ENCODE measurements at regions of chr14 and their contacts with region 1.

Region 1: GRCh38 chr14:25298238-25298637 is 248.3 kb upstream of the STXBP6 start:
- DNase-seq: no peak
- H3K4me3 ChIP-seq: no peak overlapping the region
- H3K27ac ChIP-seq: no peak overlapping the region
- H3K4me1 ChIP-seq: no peaks in the 10 kb centered on the region
- H3K27me3 ChIP-seq: no peaks in the 10 kb centered on the region
- CTCF ChIP-seq: no peak
- EP300 ChIP-seq: no peak
- POLR2A ChIP-seq: no peak

Region 2: DNA sequence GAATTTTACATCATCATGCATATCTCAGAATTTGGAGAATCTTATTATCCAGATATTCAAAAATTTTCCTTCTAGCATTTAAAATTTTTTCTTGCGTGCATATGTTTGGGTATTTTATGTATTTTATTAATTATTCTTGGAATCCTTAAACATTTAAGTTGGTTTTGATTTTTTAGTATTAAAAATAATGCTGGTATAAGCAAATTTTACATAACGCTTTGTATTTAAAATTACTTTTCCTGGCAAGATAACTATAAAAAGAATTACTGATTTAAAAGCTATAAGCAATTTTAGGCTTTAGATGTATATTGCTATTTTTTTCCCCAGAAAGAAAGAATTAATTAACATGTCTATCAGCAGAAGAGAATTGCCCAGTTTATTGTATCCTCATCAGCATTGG is 23.7 kb before region 1 on chr14:
- intact Hi-C with region 1: loop called in 1 of 4 experiments (anchors 1 kb)
- DNase-seq: no peak
- H3K4me3 ChIP-seq: no peak overlapping the region
- H3K27ac ChIP-seq: no peak overlapping the region
- H3K4me1 ChIP-seq: no peaks in the 10 kb centered on the region
- H3K27me3 ChIP-seq: no peaks in the 10 kb centered on the region
- CTCF ChIP-seq: no peak
- EP300 ChIP-seq: no peak
- POLR2A ChIP-seq: no peak

Region 3: DNA sequence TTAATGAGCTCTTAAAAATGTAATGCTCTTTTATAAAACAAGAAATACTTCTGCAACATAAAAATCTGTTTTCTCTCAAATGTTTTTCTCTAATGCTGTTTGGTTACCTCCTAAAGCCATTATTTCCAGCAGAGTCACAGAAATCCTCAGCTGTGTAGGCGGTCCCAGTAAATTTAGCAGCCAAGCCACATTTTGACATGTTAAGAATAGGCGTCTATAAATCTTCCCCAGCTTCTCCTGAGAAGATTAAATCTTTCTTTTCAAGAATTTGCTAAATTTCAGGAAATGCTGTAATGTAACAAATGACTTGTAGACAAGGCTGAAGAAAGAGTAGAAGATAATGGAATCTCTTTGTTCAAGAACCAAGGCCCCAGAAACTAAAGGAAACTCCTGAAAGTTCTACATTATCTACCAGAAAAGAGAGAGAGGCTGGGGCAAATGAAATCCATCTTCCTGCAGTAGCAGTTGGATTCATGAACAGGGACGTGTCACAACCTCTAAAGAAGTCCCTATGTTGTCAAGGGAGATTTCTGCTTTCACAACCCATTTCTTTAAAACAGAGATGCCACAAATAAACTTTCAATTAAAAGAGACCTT is 539.3 kb after region 1 on chr14:
- intact Hi-C with region 1: no loop called
- DNase-seq: no peak
- H3K4me3 ChIP-seq: no peak overlapping the region
- H3K27ac ChIP-seq: no peak overlapping the region
- H3K4me1 ChIP-seq: no peaks in the 10 kb centered on the region
- H3K27me3 ChIP-seq: no peaks in the 10 kb centered on the region
- CTCF ChIP-seq: no peak
- EP300 ChIP-seq: no peak
- POLR2A ChIP-seq: no peak

Measured in ovary (tissue), 10 donors.